Activated T-helper 1 cell treated with anti-CD3 and anti-CD28 coated beads, Interleukin-12 subunit alpha, Interleukin-12 subunit beta, Interleukin-2, Interleukin-4 antibody, amounts not matched to agents 30 ng/mL and 10 ng/mL and 1 ng/mL, durations not matched to agents 14 hours and 24 hours and 36 hours (primary cell): ENCODE measurements at regions of chr5 and their contacts with region 1.

Region 1: GRCh38 chr5:100623719-100624118 is 88.5 kb downstream of the FAM174A start:
- DNase-seq: no peak
- H3K4me3 Mint-ChIP-seq: no peak overlapping the region
- H3K27ac Mint-ChIP-seq: no peak overlapping the region
- H3K4me1 Mint-ChIP-seq: no peaks in the 10 kb centered on the region
- H3K27me3 Mint-ChIP-seq: peaks cover 2% of the 10 kb centered on the region

Region 2: GRCh38 chr5:100175346-100175745 is 448.4 kb before region 1 on chr5:
- intact Hi-C with region 1: no loop called
- DNase-seq: no peak
- H3K4me3 Mint-ChIP-seq: no peak overlapping the region
- H3K27ac Mint-ChIP-seq: no peak overlapping the region
- H3K4me1 Mint-ChIP-seq: no peaks in the 10 kb centered on the region
- H3K27me3 Mint-ChIP-seq: no peaks in the 10 kb centered on the region

Region 3: GRCh38 chr5:100762108-100762507 is 138.4 kb after region 1 on chr5:
- intact Hi-C with region 1: no loop called
- DNase-seq: no peak
- H3K4me3 Mint-ChIP-seq: no peak overlapping the region
- H3K27ac Mint-ChIP-seq: no peak overlapping the region
- H3K4me1 Mint-ChIP-seq: peaks cover 4% of the 10 kb centered on the region
- H3K27me3 Mint-ChIP-seq: peaks cover 7% of the 10 kb centered on the region

Region 4: GRCh38 chr5:100890461-100891008 is 266.8 kb after region 1 on chr5:
- intact Hi-C with region 1: no loop called
- DNase-seq: no peak
- H3K4me3 Mint-ChIP-seq: peak overlapping the region; percentile 81
- H3K27ac Mint-ChIP-seq: peak overlapping the region; percentile 94
- H3K4me1 Mint-ChIP-seq: peaks cover 85% of the 10 kb centered on the region
- H3K27me3 Mint-ChIP-seq: no peaks in the 10 kb centered on the region

Region 5: GRCh38 chr5:101045689-101046088 is 422.0 kb after region 1 on chr5:
- intact Hi-C with region 1: loop called (anchors 1 kb)
- DNase-seq: no peak
- H3K4me3 Mint-ChIP-seq: no peak overlapping the region
- H3K27ac Mint-ChIP-seq: no peak overlapping the region
- H3K4me1 Mint-ChIP-seq: peaks cover 9% of the 10 kb centered on the region
- H3K27me3 Mint-ChIP-seq: peaks cover 3% of the 10 kb centered on the region

Region 6: GRCh38 chr5:101390151-101390908 is 766.6 kb after region 1 on chr5:
- intact Hi-C with region 1: loop called (anchors 1 kb)
- DNase-seq: no peak
- H3K4me3 Mint-ChIP-seq: no peak overlapping the region
- H3K27ac Mint-ChIP-seq: no peak overlapping the region
- H3K4me1 Mint-ChIP-seq: no peaks in the 10 kb centered on the region
- H3K27me3 Mint-ChIP-seq: no peaks in the 10 kb centered on the region